ENCODE measurements at regions of chr6 and their contacts with region 1.

Region 1: DNA sequence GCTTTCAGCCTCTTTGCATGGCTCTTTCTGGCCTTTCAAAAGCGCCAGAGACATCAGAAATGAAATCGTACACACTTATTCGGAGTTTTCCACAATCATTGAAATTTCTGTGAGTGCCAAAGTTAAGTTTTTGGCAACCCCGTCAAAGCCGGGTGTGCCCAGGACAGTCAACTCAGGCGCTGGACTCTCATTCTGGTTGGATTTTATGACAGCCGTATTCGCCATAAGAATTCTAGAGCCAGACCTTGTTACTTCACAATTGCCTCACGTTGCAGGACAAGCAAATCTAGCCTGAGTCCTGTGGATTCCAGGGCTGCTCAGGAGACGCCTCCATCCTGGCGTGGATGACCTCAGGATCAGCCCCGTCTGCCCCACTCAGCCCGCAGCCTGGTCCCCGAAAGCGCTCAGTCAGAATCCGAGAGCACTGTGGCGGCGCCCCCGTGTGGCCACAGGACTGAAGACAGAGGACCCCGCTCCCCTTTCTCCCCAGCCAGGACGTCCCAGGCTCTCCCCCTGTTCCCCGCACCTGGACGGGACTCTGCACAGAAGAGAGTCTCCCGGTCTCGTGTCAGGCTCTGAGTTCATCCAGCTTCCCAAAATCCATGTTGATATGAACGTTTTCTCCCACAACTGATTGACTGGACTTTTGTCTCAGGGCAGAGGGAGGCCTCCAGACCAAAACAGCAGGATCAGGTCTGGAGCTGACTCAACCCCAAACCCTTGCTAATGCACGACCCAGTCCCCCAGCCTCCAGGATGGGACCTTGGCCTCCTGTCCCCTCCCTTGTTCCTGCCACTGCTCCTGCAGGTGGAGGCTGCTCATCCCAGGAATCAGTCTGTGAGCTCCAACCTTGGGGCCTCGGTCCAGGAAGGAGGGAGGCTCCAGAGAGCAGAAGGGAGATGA is 38.2 kb downstream of the MICA start:
- DNase-seq: peak; percentile 75
- CTCF ChIP-seq: peak; percentile 92

Region 2: GRCh38 chr6:31399589-31400466 is 41.8 kb before region 1 on chr6:
- in situ Hi-C with region 1: loop called (anchors 5 kb)
- DNase-seq: peak; percentile 75
- CTCF ChIP-seq: peak; percentile 94

Region 3: DNA sequence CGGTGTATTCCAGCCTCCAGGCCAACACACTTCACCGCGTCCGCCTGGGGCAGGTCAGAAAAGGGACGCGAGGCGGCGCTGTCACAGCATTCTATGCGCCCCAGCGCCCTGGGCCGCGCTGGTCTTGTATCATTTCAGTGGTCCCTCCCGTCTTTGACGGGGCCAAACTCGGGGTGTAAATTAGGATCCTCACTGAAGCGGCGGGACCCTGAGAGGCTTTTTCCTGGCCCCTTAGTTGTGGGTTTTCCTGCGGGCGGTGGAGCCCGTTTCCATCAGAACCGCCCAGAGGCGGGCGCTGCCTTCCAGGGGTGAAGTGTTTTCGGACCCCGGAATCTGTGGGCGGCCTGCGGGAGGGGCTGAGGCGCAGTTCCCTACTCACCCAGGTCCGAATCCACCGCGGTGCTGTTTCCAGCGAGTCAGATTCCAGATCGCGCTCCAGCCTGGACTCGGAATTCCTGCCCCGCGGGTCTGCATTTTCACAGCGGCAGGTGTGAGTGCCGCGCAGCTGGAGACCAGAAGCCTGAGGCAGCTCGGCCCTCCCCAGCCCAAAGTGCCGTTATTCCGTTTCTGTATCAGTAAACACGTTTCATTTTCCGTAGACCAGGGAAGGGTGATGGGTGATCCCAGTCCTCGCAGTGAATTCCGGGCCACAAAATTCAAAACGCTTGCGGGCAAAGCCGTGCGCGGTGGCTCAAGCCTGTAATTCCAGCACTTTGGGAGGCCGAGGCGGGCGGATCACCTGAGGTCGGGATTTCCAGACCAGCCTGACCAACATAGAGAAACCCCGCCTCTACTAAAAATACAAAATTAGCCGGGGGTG is 52.5 kb after region 1 on chr6:
- in situ Hi-C with region 1: no loop called
- DNase-seq: peak; percentile 60
- CTCF ChIP-seq: peak; percentile 77

Region 4: GRCh38 chr6:31525932-31526591 is 84.4 kb after region 1 on chr6:
- in situ Hi-C with region 1: no loop called
- DNase-seq: no peak
- CTCF ChIP-seq: no peak

Region 5: GRCh38 chr6:31739639-31740396 is 298.2 kb after region 1 on chr6 and contains the start of gene MSH5:
- in situ Hi-C with region 1: no loop called
- DNase-seq: peak; percentile 98
- CTCF ChIP-seq: no peak